B cell (primary cell): ENCODE measurements at regions of chr3 and their contacts with region 1.

Region 1: DNA sequence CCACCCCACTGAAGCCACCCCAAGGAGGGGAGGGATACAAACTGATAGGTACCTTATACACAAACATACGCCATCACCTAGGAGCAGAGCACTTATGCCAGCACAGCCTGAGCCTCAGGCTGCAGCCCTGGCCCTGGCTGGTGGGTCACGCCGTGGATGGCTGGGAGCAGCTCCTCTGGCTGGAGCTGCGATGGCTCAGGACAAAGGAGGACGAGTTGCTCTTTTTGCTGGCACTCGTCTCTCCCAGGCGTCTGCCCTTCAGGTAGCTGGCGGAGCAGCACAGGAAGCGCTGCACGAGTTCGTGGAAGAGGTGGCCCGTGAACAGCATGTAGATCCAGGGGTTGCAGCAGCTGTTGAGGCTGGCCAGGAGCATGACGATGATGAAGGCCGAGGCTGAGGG is 16.6 kb downstream of the OXTR start:
- DNase-seq: no peak
- ATAC-seq: no peak
- H3K4me3 ChIP-seq: no peak overlapping the region
- H3K4me3 Mint-ChIP-seq: no peak overlapping the region
- H3K27ac ChIP-seq: no peak overlapping the region
- H3K27ac Mint-ChIP-seq: no peak overlapping the region
- H3K4me1 ChIP-seq: no peaks in the 10 kb centered on the region
- H3K4me1 Mint-ChIP-seq: no peaks in the 10 kb centered on the region
- H3K27me3 ChIP-seq: no peaks in the 10 kb centered on the region
- H3K27me3 Mint-ChIP-seq: no peaks in the 10 kb centered on the region
- CTCF ChIP-seq: no peak

Region 2: DNA sequence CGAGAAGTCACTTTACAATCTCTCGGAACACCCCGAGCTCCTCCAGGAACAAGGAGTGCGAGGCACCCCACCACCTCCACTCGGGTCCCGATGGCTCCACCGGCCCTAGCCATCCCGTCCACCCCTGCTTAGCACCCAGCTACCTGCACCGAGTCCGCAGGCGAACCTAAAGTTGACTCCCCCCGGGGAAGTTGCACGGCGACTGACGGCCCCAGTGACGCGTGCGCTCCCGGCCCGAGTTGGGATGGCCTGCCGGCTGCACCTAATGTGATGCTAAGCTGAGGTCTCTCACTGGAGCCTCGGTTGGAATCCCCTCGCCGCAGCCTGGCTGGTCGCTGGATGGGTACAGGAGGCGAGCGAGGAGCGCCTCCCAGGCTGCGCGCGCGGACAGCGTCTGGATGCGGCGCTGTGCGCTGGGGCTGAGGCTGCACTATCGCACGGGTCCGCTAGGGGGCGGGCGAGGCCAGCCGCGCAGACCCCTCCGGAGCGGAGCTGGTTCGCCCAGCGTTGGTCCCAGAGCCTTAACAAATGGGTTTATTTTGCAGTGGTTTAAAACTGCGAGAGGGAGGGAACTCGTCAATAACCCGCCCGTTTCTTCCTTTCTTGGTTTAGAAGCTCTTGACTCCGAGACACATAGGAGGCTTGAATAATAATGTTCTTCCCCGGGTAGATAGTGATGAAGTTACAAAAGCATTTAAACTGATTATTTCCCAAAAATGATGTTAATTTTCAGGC is 16.4 kb after region 1 on chr3 and contains the start of gene OXTR:
- CTCF ChIA-PET with region 1: interaction called, 10 read pairs
- POLR2A ChIA-PET with region 1: no interaction called
- intact Hi-C with region 1: no loop called
- DNase-seq: peak; percentile 62
- ATAC-seq: peak; percentile 88
- H3K4me3 ChIP-seq: peak within 1 kb of the TSS in 3 of 5 experiments; percentile 21 to 52 (median 35)
- H3K4me3 Mint-ChIP-seq: peak within 1 kb of the TSS; percentile 72
- H3K27ac ChIP-seq: no peak within 1 kb of the TSS
- H3K27ac Mint-ChIP-seq: no peak within 1 kb of the TSS
- H3K4me1 ChIP-seq: peaks cover 17 to 22% of the 10 kb centered on the region in 2 donors
- H3K4me1 Mint-ChIP-seq: peaks cover 19% of the 10 kb centered on the region
- H3K27me3 ChIP-seq: peaks cover 0 to 32% (median 12%) of the 10 kb centered on the region in 4 experiments
- H3K27me3 Mint-ChIP-seq: peaks cover 30% of the 10 kb centered on the region
- CTCF ChIP-seq: peak; percentile 99
- total RNA-seq, gene OXTR: 0.10 and 0.17 TPM in 2 replicates